Heart right ventricle (tissue), 16 donors: ENCODE measurements at regions of chr19 and their contacts with region 1.

Region 1: DNA sequence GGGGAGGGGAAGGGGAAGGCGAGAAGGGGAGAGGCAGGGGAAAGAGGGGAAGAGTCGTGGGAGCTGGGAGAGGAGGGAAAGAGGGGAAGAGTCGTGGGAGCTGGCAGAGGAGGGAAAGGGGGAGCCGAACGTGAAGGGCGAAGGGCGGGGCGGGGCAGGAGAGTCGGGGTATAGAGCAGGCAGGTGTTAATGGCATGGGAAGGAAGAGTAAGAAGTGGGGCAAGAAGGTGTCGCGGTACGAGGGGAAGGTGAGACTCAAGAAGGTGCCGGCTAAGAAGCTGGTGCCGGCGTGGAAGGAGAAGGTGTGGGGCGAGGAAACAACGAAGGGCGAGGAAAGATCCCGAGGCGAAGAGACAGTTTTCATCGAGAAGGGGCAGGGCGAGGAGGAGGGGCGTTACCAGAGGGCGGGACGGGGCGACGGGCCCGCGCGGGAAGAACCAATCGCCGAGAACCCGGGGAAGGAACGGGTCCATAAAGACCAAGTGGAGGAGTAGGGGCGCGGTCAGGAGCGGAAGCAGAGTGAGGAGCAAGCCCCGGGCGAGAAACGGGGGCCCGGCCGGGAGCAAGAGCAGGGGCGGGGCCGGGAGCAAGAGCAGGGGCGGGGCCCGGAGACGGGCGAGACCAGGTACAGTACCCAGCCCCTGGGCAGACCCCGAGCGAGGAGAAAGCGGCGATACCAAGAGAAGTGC is 463 bp downstream of the CATSPERG start:
- DNase-seq: peak; percentile 94 to 95
- ATAC-seq: peak; percentile 88 to 96 (median 94)
- H3K4me3 ChIP-seq: peak overlapping the region; percentile 12 to 87 (median 76)
- H3K27ac ChIP-seq: peak overlapping the region; percentile 83 to 95 (median 92)
- H3K4me1 ChIP-seq: peaks cover 0 to 12% (median 9%) of the 10 kb centered on the region in 9 donors
- H3K27me3 ChIP-seq: no peaks in the 10 kb centered on the region
- CTCF ChIP-seq: no peak

Region 2: DNA sequence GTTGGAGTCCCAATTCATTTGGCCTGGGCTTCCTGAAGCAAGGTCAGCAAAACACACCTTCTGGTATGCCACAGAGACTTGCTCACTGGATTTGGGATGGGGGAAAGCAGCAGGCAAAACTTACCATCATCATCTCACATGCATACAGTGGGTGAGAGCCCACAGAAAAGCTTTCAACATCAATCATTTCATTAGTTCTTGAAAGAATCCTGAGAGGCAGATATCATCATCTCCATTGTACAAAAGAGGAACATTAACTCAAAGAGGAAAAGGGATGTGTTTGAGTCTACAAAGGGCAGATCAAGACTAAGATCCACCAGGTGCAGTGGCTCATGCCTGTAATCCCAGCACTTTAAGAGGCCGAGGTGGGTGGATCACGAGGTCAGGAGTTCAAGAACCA is 436.1 kb before region 1 on chr19:
- intact Hi-C with region 1: loop called in 5 of 10 experiments (anchors 2 to 10 kb)
- DNase-seq: no peak
- ATAC-seq: no peak
- H3K4me3 ChIP-seq: no peak overlapping the region
- H3K27ac ChIP-seq: no peak overlapping the region
- H3K4me1 ChIP-seq: no peaks in the 10 kb centered on the region
- H3K27me3 ChIP-seq: no peaks in the 10 kb centered on the region
- CTCF ChIP-seq: no peak

Region 3: DNA sequence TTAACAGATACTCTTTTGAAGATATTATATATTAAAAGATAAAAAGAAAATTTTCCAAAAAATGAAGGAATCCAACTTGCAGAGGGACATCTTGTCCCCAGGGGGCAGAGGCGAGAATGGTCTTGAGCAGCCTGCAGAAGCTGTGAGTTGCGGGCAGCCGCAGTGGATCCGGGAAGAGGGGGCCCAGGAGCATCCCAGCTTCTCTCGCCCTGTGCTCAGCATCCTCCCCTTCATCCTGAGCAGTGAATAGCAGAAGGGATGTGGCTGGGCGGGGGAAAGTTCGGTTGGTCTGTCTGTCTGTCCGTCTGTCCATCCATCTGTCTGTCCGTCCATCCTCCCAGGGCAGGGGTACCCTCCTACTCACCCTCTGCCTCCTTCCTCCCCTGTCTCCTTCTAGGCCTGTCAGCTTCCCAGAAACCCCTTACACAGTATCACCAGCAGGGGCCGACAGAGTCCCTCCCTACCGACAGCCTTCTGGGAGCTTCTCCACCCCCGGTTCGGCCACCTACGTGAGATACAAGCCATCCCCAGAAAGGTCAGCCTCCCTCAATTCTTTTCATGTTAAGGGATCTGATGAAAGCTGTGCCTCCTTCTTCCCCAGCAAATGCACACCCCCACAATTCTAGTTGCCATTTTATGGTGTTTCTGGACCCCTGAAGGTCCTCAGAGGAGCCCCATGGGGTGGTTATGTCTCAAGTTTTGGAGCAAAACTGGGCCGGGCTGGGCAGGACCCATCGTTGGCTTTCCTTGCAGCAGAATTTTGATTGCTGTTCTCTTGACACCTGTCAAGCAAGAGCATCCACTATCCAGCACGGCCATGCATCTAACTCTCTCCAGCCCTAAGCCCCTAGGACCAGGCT is 193.7 kb before region 1 on chr19:
- intact Hi-C with region 1: loop called in 4 of 10 experiments (anchors 5 to 10 kb)
- DNase-seq: peak; percentile 64
- ATAC-seq: peak in 7 of 8 donors; percentile 50 to 82 (median 76)
- H3K4me3 ChIP-seq: no peak overlapping the region
- H3K27ac ChIP-seq: no peak overlapping the region
- H3K4me1 ChIP-seq: no peaks in the 10 kb centered on the region
- H3K27me3 ChIP-seq: no peaks in the 10 kb centered on the region
- CTCF ChIP-seq: peak; percentile 29 to 75 (median 68)

Region 4: DNA sequence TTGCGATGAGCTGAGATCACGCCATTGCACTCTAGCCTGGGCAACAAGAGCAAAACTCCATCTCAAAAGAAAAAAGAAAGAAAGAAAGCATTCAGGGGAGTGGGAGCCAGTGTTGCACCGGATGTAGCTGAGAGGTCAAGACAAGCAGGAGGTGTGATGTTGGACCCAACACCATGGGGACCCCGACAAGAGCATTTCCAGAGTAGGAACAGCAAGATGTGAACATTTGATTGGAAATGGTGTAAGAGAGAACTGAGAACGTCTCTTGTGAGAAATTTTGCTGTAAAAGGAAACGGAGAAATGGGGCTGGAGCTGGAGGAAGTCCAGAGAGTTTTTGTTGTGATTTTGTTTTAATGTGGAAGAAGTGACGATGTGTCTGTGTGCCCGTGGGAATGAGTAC is 96.3 kb before region 1 on chr19:
- intact Hi-C with region 1: loop called (anchors 1 to 5 kb)
- DNase-seq: no peak
- ATAC-seq: no peak
- H3K4me3 ChIP-seq: no peak overlapping the region
- H3K27ac ChIP-seq: peak overlapping the region in 2 of 10 donors; percentile 4 to 28
- H3K4me1 ChIP-seq: peaks cover 0 to 24% (median 5%) of the 10 kb centered on the region in 9 donors
- H3K27me3 ChIP-seq: no peaks in the 10 kb centered on the region
- CTCF ChIP-seq: no peak

Region 5: GRCh38 chr19:38245826-38246498 is 90.1 kb before region 1 on chr19:
- intact Hi-C with region 1: loop called (anchors 1 to 5 kb)
- DNase-seq: no peak
- ATAC-seq: peak in 1 of 8 donors; percentile 35
- H3K4me3 ChIP-seq: no peak overlapping the region
- H3K27ac ChIP-seq: peak overlapping the region in 4 of 10 donors; percentile 8 to 63 (median 56)
- H3K4me1 ChIP-seq: peaks cover 0 to 75% (median 20%) of the 10 kb centered on the region in 9 donors
- H3K27me3 ChIP-seq: no peaks in the 10 kb centered on the region
- CTCF ChIP-seq: no peak

Region 6: DNA sequence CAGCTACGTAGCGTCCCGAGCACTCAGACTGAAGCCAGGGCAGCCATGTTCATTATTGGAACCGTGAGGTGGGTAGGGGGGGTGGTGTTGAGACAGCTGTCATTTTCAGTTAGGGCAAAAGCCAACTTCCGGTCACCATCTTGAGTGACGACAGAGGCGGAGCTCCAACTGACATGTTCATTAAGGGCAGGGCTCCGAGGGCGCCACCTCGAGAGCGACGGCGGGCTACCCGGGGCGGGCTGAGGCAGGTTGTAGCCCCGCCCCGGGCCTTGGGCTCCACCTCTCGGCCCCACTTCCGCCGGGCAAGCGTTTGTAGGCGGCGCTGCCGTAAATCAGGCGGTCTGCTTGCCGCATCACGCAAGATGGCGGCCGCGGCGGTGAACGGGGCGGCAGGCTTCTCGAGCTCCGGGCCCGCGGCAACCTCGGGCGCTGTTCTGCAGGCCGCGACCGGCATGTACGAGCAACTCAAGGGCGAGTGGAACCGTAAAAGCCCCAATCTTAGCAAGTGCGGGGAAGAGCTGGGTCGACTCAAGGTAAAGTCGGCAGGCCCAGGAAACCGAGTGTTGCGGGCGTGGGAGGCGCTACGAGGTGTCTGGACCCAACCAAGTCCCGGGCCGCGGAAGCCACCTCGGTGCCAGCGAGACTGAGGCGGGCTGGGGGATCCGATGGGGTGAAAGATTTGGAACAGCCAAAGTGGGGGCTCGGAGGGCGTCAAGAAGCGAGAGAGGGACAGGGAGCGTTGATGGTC is 38.5 kb after region 1 on chr19 and contains the start of gene PSMD8:
- intact Hi-C with region 1: loop called in 8 of 10 experiments (anchors 1 to 5 kb)
- DNase-seq: peak; percentile 99
- ATAC-seq: peak; percentile 98 to 99 (median 98)
- H3K4me3 ChIP-seq: peak within 1 kb of the TSS; percentile 53 to 90 (median 80)
- H3K27ac ChIP-seq: peak within 1 kb of the TSS; percentile 82 to 95 (median 88)
- H3K4me1 ChIP-seq: peaks cover 11 to 35% (median 23%) of the 10 kb centered on the region in 9 donors
- H3K27me3 ChIP-seq: peaks cover 0 to 2% (median 0%) of the 10 kb centered on the region in 7 donors
- CTCF ChIP-seq: peak in 7 of 9 donors; percentile 7 to 57 (median 39)
- total RNA-seq, gene PSMD8: 234 to 426 (median 302) TPM

Region 7: GRCh38 chr19:38784224-38784623 is 448.1 kb after region 1 on chr19:
- intact Hi-C with region 1: no loop called
- DNase-seq: no peak
- ATAC-seq: no peak
- H3K4me3 ChIP-seq: no peak overlapping the region
- H3K27ac ChIP-seq: no peak overlapping the region
- H3K4me1 ChIP-seq: no peaks in the 10 kb centered on the region
- H3K27me3 ChIP-seq: peaks cover 0 to 8% (median 4%) of the 10 kb centered on the region in 7 donors
- CTCF ChIP-seq: no peak